ENCODE measurements at regions of chr4 and their contacts with region 1.

Region 1: GRCh38 chr4:109424093-109424841 is 9.3 kb upstream of the SEC24B start:
- DNase-seq: peak in 1 of 2 experiments; percentile 44
- H3K4me3 ChIP-seq: no peak overlapping the region
- H3K4me3 Mint-ChIP-seq: no peak overlapping the region
- H3K27ac Mint-ChIP-seq: no peak overlapping the region
- H3K4me1 ChIP-seq: peaks cover 9% of the 10 kb centered on the region; the same call in 1 of the 2 replicates
- H3K4me1 Mint-ChIP-seq: peaks cover 6% of the 10 kb centered on the region
- H3K27me3 ChIP-seq: no peaks in the 10 kb centered on the region
- H3K27me3 Mint-ChIP-seq: no peaks in the 10 kb centered on the region
- CTCF ChIP-seq: no peak

Region 2: GRCh38 chr4:109574102-109574850 is 150.0 kb after region 1 on chr4:
- CTCF ChIA-PET with region 1: no interaction called
- POLR2A ChIA-PET with region 1: no interaction called
- intact Hi-C with region 1: loop called (anchors 1 kb)
- DNase-seq: peak in 1 of 2 experiments; percentile 35
- H3K4me3 ChIP-seq: no peak overlapping the region
- H3K4me3 Mint-ChIP-seq: no peak overlapping the region
- H3K27ac Mint-ChIP-seq: no peak overlapping the region
- H3K4me1 ChIP-seq: no peaks in the 10 kb centered on the region
- H3K4me1 Mint-ChIP-seq: no peaks in the 10 kb centered on the region
- H3K27me3 ChIP-seq: no peaks in the 10 kb centered on the region
- H3K27me3 Mint-ChIP-seq: peaks cover 3% of the 10 kb centered on the region
- CTCF ChIP-seq: peak; percentile 22 to 59

Region 3: DNA sequence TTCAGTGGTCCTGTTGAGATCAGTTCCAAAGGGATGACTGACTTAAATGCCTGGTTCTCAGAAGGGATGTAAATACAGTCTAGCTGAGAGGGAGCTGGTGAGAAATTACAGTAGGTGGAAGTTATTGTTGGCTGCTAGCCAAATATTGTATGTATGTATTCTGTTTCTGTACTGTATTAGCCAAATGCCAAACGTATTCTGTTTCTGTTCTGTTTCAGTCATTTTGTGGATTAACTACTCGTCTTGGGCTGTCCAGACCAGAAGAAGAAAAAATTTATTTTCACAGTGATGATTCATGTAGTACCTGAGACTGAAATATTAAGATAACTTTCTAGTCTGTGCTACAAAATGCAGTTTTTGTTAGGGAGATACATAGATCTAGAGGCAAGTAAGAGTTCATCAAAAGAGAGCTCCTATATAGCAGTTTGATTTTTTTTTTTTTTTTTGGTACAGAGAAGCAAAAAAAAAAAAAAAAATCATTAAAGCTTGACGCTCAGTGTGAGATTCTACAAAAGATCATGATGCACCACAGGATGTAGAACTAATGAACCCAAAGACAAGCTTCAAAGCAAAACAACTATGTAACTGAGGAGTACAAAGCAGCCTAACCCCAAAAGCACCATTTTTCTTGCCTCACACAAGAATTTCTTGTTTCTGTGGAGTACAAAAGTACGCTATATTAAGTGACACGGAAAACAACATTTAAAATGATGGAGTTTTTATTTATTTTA is 224.2 kb after region 1 on chr4:
- CTCF ChIA-PET with region 1: no interaction called
- POLR2A ChIA-PET with region 1: no interaction called
- intact Hi-C with region 1: loop called (anchors 2 kb)
- DNase-seq: no peak
- H3K4me3 ChIP-seq: no peak overlapping the region
- H3K4me3 Mint-ChIP-seq: no peak overlapping the region
- H3K27ac Mint-ChIP-seq: no peak overlapping the region
- H3K4me1 ChIP-seq: no peaks in the 10 kb centered on the region
- H3K4me1 Mint-ChIP-seq: no peaks in the 10 kb centered on the region
- H3K27me3 ChIP-seq: no peaks in the 10 kb centered on the region
- H3K27me3 Mint-ChIP-seq: peaks cover 6% of the 10 kb centered on the region
- CTCF ChIP-seq: no peak

Region 4: GRCh38 chr4:109803924-109804571 is 379.8 kb after region 1 on chr4:
- CTCF ChIA-PET with region 1: interaction called, 3 read pairs
- POLR2A ChIA-PET with region 1: no interaction called
- intact Hi-C with region 1: loop called (anchors 1 kb)
- DNase-seq: peak; percentile 29 to 33
- H3K4me3 ChIP-seq: no peak overlapping the region
- H3K4me3 Mint-ChIP-seq: no peak overlapping the region
- H3K27ac Mint-ChIP-seq: no peak overlapping the region
- H3K4me1 ChIP-seq: no peaks in the 10 kb centered on the region
- H3K4me1 Mint-ChIP-seq: no peaks in the 10 kb centered on the region
- H3K27me3 ChIP-seq: no peaks in the 10 kb centered on the region
- H3K27me3 Mint-ChIP-seq: peaks cover 5% of the 10 kb centered on the region
- CTCF ChIP-seq: peak in 1 of 2 experiments; percentile 47

Region 5: DNA sequence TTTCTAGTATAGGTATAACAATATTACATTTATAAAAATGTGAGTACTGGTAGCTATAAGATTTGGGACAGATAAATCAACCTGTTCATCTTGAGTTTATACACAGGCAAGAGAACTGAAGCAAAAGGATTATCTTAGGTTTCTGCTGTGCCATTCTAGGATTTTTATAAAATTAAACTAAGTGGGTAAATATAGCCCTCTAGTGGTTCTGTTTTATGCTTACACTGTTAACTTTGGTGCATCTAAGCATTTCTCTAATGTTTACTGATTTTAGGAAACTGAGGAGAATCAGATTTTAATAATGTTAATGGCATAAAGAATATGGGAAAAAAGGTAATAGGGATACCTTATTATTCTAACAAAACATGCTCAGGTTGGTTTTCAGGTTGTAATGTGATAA is 402.5 kb after region 1 on chr4:
- CTCF ChIA-PET with region 1: no interaction called
- POLR2A ChIA-PET with region 1: no interaction called
- intact Hi-C with region 1: loop called (anchors 1 kb)
- DNase-seq: no peak
- H3K4me3 ChIP-seq: no peak overlapping the region
- H3K4me3 Mint-ChIP-seq: no peak overlapping the region
- H3K27ac Mint-ChIP-seq: no peak overlapping the region
- H3K4me1 ChIP-seq: no peaks in the 10 kb centered on the region
- H3K4me1 Mint-ChIP-seq: no peaks in the 10 kb centered on the region
- H3K27me3 ChIP-seq: no peaks in the 10 kb centered on the region
- H3K27me3 Mint-ChIP-seq: no peaks in the 10 kb centered on the region
- CTCF ChIP-seq: peak; percentile 38 to 41

Region 6: GRCh38 chr4:109977854-109978501 is 553.7 kb after region 1 on chr4:
- CTCF ChIA-PET with region 1: interaction called, 7 read pairs
- POLR2A ChIA-PET with region 1: no interaction called
- intact Hi-C with region 1: loop called (anchors 2 kb)
- DNase-seq: no peak
- H3K4me3 ChIP-seq: no peak overlapping the region
- H3K4me3 Mint-ChIP-seq: no peak overlapping the region
- H3K27ac Mint-ChIP-seq: no peak overlapping the region
- H3K4me1 ChIP-seq: peaks cover 20% of the 10 kb centered on the region; the same call in 1 of the 2 replicates
- H3K4me1 Mint-ChIP-seq: peaks cover 13% of the 10 kb centered on the region
- H3K27me3 ChIP-seq: no peaks in the 10 kb centered on the region
- H3K27me3 Mint-ChIP-seq: no peaks in the 10 kb centered on the region
- CTCF ChIP-seq: peak; percentile 48 to 56

Measured in Caco-2 (cell line).